ENCODE measurements at regions of chr7 and their contacts with region 1.

Region 1: GRCh38 chr7:112449902-112450806 is at the start of gene IFRD1:
- DNase-seq: peak; percentile 95
- CTCF ChIP-seq: no peak

Region 2: GRCh38 chr7:112206238-112207044 is 243.7 kb before region 1 on chr7 and contains the starts of genes DOCK4 and ZNF277:
- CTCF ChIA-PET with region 1: no interaction called
- POLR2A ChIA-PET with region 1: interaction called, 14 read pairs
- DNase-seq: peak; percentile 95
- CTCF ChIP-seq: no peak

Region 3: GRCh38 chr7:112395411-112395810 is 54.7 kb before region 1 on chr7:
- CTCF ChIA-PET with region 1: no interaction called
- POLR2A ChIA-PET with region 1: no interaction called
- DNase-seq: no peak
- CTCF ChIP-seq: no peak

Region 4: GRCh38 chr7:112427984-112428383 is 22.2 kb before region 1 on chr7:
- CTCF ChIA-PET with region 1: no interaction called
- POLR2A ChIA-PET with region 1: interaction called, 11 read pairs
- DNase-seq: no peak
- CTCF ChIP-seq: no peak

Region 5: DNA sequence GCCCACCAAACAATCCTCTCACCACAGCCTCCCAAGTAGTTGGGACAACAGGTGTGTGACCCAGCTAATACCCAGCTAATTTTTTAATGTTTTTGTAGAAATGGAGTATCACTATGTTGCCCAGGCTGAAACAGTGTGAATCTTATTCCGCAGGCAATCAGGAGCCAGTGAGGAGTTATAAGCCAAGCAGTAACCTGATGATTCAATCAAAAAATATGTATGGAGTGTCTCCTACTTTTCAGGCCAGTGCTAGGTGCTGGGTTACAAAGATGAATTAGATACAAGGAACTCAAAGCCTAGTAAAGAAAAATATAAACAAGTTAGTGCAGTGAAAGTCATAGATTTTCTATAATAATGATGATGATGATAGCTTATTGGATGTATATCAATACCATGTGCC is 13.1 kb before region 1 on chr7:
- CTCF ChIA-PET with region 1: interaction called, 3 read pairs
- POLR2A ChIA-PET with region 1: interaction called, 12 read pairs
- DNase-seq: no peak
- CTCF ChIP-seq: no peak

Region 6: GRCh38 chr7:112462236-112462635 is 12.1 kb after region 1 on chr7:
- CTCF ChIA-PET with region 1: interaction called, 24 read pairs
- POLR2A ChIA-PET with region 1: interaction called, 154 read pairs
- DNase-seq: no peak
- CTCF ChIP-seq: no peak

Region 7: GRCh38 chr7:112470194-112470593 is 20.0 kb after region 1 on chr7:
- CTCF ChIA-PET with region 1: interaction called, 4 read pairs
- POLR2A ChIA-PET with region 1: interaction called, 154 read pairs
- DNase-seq: no peak
- CTCF ChIP-seq: no peak

Region 8: DNA sequence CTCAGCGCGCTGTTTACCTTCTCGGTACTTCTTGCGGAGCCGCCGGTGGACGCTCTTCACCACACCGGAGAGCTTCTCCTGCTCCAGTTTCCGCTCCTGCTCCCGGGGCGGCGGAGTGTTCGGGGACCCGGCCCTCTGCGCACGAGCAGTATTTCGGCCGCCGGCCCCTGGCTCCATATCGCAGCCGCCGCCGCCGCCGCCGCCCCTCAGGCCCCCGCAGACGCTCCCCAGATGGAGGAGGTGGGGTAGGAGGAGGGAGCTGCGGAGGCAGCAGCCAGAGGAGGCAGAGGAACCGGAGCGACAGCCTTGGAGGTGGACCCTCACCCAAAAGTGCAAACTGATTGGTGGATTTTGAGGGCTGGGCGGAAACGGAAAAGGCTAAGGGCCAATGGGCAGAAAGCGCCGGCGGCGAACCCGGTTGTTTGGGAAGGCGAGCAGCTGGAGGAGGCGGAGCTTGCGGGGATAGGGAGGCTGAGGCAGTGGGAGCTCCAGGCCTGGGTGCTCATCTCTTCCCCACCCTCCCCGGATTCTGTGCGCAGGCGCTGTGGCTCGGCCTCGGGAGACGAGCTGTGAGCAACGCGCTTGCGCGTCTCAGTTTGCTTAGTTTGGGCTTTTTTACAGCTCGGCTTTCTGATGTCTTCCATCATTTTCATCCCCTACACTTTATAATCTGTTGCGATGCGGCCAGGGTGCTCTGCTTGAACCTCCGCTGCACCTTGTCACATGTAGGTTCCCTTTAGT is 489.6 kb after region 1 on chr7:
- CTCF ChIA-PET with region 1: no interaction called
- POLR2A ChIA-PET with region 1: interaction called, 18 read pairs
- DNase-seq: peak; percentile 97
- CTCF ChIP-seq: no peak

Region 9: GRCh38 chr7:113015032-113015645 is 565.0 kb after region 1 on chr7:
- CTCF ChIA-PET with region 1: no interaction called
- POLR2A ChIA-PET with region 1: no interaction called
- DNase-seq: no peak
- CTCF ChIP-seq: peak; percentile 16

Measured in GM10248 (cell line).